Activated naive CD4-positive, alpha-beta T cell treated with anti-CD3 and anti-CD28 coated beads, Interleukin-2, amount 10 ng/mL, durations not matched to agents 7 days and 5 days (primary cell): ENCODE measurements at regions of chr3 and their contacts with region 1.

Region 1: GRCh38 chr3:159260049-159260662 is 458.3 kb downstream of the MFSD1 start:
- DNase-seq: peak; percentile 54
- H3K4me3 Mint-ChIP-seq: no peak overlapping the region
- H3K27ac Mint-ChIP-seq: no peak overlapping the region
- H3K4me1 Mint-ChIP-seq: no peaks in the 10 kb centered on the region
- H3K27me3 Mint-ChIP-seq: no peaks in the 10 kb centered on the region

Region 2: GRCh38 chr3:158845765-158846350 is 414.3 kb before region 1 on chr3:
- CTCF ChIA-PET with region 1: interaction called, 49 read pairs
- DNase-seq: peak; percentile 37
- H3K4me3 Mint-ChIP-seq: no peak overlapping the region
- H3K27ac Mint-ChIP-seq: no peak overlapping the region
- H3K4me1 Mint-ChIP-seq: peaks cover 20% of the 10 kb centered on the region
- H3K27me3 Mint-ChIP-seq: peaks cover 4% of the 10 kb centered on the region

Region 3: GRCh38 chr3:159804726-159805410 is 544.7 kb after region 1 on chr3:
- CTCF ChIA-PET with region 1: interaction called, 24 read pairs
- DNase-seq: peak; percentile 50
- H3K4me3 Mint-ChIP-seq: no peak overlapping the region
- H3K27ac Mint-ChIP-seq: no peak overlapping the region
- H3K4me1 Mint-ChIP-seq: no peaks in the 10 kb centered on the region
- H3K27me3 Mint-ChIP-seq: peaks cover 6% of the 10 kb centered on the region